ENCODE measurements at regions of chr2 and their contacts with region 1.

Region 1: DNA sequence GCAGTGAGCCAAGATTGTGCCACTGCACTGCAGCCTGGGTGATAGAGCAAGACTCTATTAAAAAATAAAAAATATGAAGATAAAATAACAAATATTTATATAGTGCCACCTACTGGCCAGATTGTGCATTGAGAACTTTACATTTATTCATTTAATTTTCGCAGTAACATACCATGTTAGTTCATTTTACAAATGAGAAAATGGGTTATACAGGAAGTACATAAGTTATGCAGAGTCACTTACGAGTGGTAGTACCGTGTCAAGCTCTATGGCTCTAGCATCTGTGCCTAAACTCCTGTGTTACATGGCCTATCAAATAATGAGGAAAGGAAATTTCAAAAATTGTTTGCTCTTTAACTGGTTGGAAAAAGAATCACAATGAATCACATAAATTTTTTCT is 27.9 kb downstream of the RIF1 start:
- DNase-seq: peak in 3 of 9 experiments; percentile 19 to 48 (median 36)
- ATAC-seq: peak; percentile 62
- H3K4me3 ChIP-seq: no peak overlapping the region
- H3K4me3 Mint-ChIP-seq: no peak overlapping the region
- H3K27ac ChIP-seq: no peak overlapping the region
- H3K27ac Mint-ChIP-seq: peak overlapping the region; percentile 66
- H3K4me1 ChIP-seq: peaks cover 3% of the 10 kb centered on the region
- H3K4me1 Mint-ChIP-seq: peaks cover 7% of the 10 kb centered on the region
- H3K27me3 ChIP-seq: no peaks in the 10 kb centered on the region
- H3K27me3 Mint-ChIP-seq: no peaks in the 10 kb centered on the region
- CTCF ChIP-seq: peak; percentile 84

Region 2: DNA sequence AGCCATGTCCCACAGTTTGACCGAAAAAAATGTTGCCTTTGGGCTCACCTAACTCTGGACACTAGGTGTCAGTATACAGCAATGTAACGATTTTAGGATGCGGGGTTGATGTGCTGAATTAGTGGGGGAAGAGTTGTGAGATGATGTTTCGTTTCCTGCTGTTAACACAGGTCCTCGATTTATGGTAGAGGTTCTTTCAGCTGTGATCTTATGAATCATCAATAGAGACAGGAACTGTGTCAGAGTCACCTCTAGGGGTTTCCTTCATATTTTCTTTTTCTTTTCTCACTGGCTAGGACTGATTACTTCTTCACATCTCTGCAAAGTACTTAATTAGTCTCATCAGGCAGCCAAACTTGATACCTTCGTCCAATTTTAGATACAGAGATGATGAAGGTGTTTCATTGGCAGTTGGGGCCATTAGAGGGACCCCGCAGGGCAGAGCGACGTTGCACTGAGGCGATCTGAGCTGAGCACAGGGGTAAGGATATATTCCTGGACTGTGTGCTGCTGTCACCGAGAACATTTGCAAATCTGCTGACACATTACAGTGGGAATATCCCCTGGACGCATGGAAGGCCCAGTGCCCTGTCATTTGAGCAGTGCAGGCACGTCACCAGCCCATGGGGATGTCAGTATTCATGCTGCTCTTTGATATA is 1839.8 kb before region 1 on chr2:
- CTCF ChIA-PET with region 1: no interaction called
- POLR2A ChIA-PET with region 1: no interaction called
- intact Hi-C with region 1: loop called (anchors 1 to 2 kb)
- DNase-seq: peak; percentile 6 to 84 (median 45)
- ATAC-seq: peak; percentile 96
- H3K4me3 ChIP-seq: no peak overlapping the region
- H3K4me3 Mint-ChIP-seq: peak overlapping the region; percentile 53
- H3K27ac ChIP-seq: peak overlapping the region in 1 of 2 experiments; percentile 14
- H3K27ac Mint-ChIP-seq: no peak overlapping the region
- H3K4me1 ChIP-seq: peaks cover 3% of the 10 kb centered on the region
- H3K4me1 Mint-ChIP-seq: peaks cover 14% of the 10 kb centered on the region
- H3K27me3 ChIP-seq: no peaks in the 10 kb centered on the region
- H3K27me3 Mint-ChIP-seq: peaks cover 13% of the 10 kb centered on the region
- CTCF ChIP-seq: peak; percentile 82

Region 3: GRCh38 chr2:151171186-151171585 is 266.4 kb before region 1 on chr2:
- CTCF ChIA-PET with region 1: interaction called, 3 read pairs
- POLR2A ChIA-PET with region 1: no interaction called
- intact Hi-C with region 1: loop called in 1 of 2 experiments (anchors 5 kb)
- DNase-seq: no peak
- ATAC-seq: no peak
- H3K4me3 ChIP-seq: no peak overlapping the region
- H3K4me3 Mint-ChIP-seq: no peak overlapping the region
- H3K27ac ChIP-seq: no peak overlapping the region
- H3K27ac Mint-ChIP-seq: no peak overlapping the region
- H3K4me1 ChIP-seq: no peaks in the 10 kb centered on the region
- H3K4me1 Mint-ChIP-seq: no peaks in the 10 kb centered on the region
- H3K27me3 ChIP-seq: no peaks in the 10 kb centered on the region
- H3K27me3 Mint-ChIP-seq: peaks cover 9% of the 10 kb centered on the region
- CTCF ChIP-seq: no peak

Region 4: DNA sequence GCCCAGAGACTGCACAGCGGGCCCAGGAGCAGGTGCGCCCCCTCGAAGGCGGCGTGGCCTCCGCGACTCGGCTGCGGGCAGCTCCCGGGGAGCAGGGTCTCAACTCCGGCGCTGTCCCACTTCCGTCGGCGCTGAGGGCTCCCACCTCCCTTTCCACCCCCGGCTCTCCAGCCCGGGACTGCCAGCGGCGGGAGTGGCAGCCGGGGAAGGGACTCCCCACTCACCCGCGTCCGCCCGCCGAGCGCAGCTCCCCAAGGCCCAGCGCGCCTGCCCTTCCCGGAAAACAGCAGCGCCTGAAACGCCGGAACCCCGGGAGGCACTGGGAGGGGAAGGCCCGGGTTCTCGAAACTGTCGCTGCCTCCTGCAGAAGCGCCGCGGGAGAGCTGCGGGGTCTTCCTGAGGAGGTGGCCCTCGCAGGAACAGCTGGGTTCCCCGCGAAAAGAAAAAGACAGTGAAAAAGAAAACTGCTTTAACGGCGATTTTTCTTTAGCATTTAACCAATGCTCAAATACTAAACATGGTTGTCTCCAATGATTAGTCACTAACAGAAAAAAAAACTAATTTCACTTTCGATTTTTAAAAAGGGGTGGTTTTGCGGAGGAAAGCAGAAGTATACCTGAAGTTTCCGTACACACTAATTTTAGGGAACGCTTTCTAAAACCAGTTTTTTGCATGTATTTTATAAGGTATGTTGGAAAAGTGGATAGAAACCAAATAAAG is 148.1 kb before region 1 on chr2 and contains the start of gene NMI:
- CTCF ChIA-PET with region 1: interaction called, 5 read pairs
- POLR2A ChIA-PET with region 1: no interaction called
- intact Hi-C with region 1: loop called in 1 of 2 experiments (anchors 5 kb)
- DNase-seq: peak; percentile 30 to 82 (median 64)
- ATAC-seq: peak; percentile 68
- H3K4me3 ChIP-seq: peak within 1 kb of the TSS; percentile 89 to 92
- H3K4me3 Mint-ChIP-seq: peak within 1 kb of the TSS; percentile 95
- H3K27ac ChIP-seq: peak within 1 kb of the TSS; percentile 92 to 97
- H3K27ac Mint-ChIP-seq: peak within 1 kb of the TSS; percentile 99
- H3K4me1 ChIP-seq: peaks cover 31% of the 10 kb centered on the region
- H3K4me1 Mint-ChIP-seq: peaks cover 46% of the 10 kb centered on the region
- H3K27me3 ChIP-seq: no peaks in the 10 kb centered on the region
- H3K27me3 Mint-ChIP-seq: no peaks in the 10 kb centered on the region
- CTCF ChIP-seq: no peak
- total RNA-seq, gene NMI: 16.9 to 18.0 TPM

Region 5: GRCh38 chr2:151422917-151423439 is 14.7 kb before region 1 on chr2:
- CTCF ChIA-PET with region 1: interaction called, 20 read pairs
- POLR2A ChIA-PET with region 1: interaction called, 3 read pairs
- intact Hi-C with region 1: no loop called
- DNase-seq: peak in 1 of 9 experiments; percentile 9
- ATAC-seq: no peak
- H3K4me3 ChIP-seq: no peak overlapping the region
- H3K4me3 Mint-ChIP-seq: no peak overlapping the region
- H3K27ac ChIP-seq: peak overlapping the region; percentile 9 to 44
- H3K27ac Mint-ChIP-seq: peak overlapping the region; percentile 92
- H3K4me1 ChIP-seq: peaks cover 10% of the 10 kb centered on the region
- H3K4me1 Mint-ChIP-seq: peaks cover 35% of the 10 kb centered on the region
- H3K27me3 ChIP-seq: no peaks in the 10 kb centered on the region
- H3K27me3 Mint-ChIP-seq: no peaks in the 10 kb centered on the region
- CTCF ChIP-seq: no peak

Region 6: GRCh38 chr2:151459358-151459757 is 21.7 kb after region 1 on chr2:
- CTCF ChIA-PET with region 1: interaction called, 13 read pairs
- POLR2A ChIA-PET with region 1: no interaction called
- intact Hi-C with region 1: no loop called
- DNase-seq: no peak
- ATAC-seq: no peak
- H3K4me3 ChIP-seq: no peak overlapping the region
- H3K4me3 Mint-ChIP-seq: no peak overlapping the region
- H3K27ac ChIP-seq: no peak overlapping the region
- H3K27ac Mint-ChIP-seq: no peak overlapping the region
- H3K4me1 ChIP-seq: no peaks in the 10 kb centered on the region
- H3K4me1 Mint-ChIP-seq: no peaks in the 10 kb centered on the region
- H3K27me3 ChIP-seq: no peaks in the 10 kb centered on the region
- H3K27me3 Mint-ChIP-seq: no peaks in the 10 kb centered on the region
- CTCF ChIP-seq: no peak

Region 7: DNA sequence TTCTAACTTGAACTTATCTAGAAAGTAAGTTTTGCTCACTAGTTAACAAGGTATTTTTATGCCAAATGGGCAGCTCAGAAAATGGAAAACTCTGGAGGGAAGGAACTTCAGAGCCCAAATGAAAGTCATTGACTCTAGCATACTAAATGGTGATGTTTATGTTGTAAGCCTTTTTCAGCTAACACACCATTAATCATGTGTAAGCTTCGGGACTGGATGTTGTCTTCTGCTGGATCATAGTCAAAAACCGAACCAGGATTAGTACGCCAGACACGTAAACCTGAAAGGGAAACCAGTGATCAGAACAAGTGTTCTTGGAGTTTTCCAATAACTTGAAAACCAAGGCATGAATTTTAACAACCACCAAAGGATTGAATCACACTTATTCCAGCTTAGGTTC is 53.9 kb after region 1 on chr2:
- CTCF ChIA-PET with region 1: no interaction called
- POLR2A ChIA-PET with region 1: no interaction called
- intact Hi-C with region 1: no loop called
- DNase-seq: no peak
- ATAC-seq: no peak
- H3K4me3 ChIP-seq: no peak overlapping the region
- H3K4me3 Mint-ChIP-seq: no peak overlapping the region
- H3K27ac ChIP-seq: no peak overlapping the region
- H3K27ac Mint-ChIP-seq: no peak overlapping the region
- H3K4me1 ChIP-seq: no peaks in the 10 kb centered on the region
- H3K4me1 Mint-ChIP-seq: no peaks in the 10 kb centered on the region
- H3K27me3 ChIP-seq: no peaks in the 10 kb centered on the region
- H3K27me3 Mint-ChIP-seq: no peaks in the 10 kb centered on the region
- CTCF ChIP-seq: no peak

Region 8: DNA sequence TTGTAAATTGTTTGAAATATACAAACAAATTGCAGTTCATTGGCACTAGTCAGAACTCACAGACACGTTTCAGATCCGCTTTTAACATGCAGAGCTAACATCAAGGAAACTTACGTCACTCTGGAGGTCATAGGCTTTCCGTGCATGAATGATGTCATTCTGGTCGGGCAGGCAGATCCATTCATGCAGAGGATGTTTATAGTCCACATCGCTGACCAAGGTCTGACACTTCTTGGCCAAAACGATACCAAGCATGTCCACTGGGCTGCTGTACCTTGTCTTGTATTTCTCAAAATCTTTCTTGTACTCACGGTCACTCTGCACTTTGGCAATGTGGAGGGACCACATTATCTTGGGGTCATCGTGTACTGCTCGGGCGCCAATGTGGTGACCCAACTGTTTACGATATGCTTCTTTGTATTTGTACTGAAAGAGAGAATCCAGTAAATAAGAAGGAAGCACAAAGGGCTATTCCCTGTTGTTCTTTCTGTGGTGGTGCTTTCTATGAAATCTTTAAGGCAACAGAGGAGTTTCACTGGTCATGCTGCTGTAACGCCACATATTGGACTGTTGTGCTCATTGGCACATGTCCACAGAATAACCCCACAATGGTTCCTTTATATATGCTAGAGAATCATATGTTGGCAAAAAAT is 181.8 kb after region 1 on chr2:
- CTCF ChIA-PET with region 1: no interaction called
- POLR2A ChIA-PET with region 1: no interaction called
- intact Hi-C with region 1: no loop called
- DNase-seq: no peak
- ATAC-seq: no peak
- H3K4me3 ChIP-seq: no peak overlapping the region
- H3K4me3 Mint-ChIP-seq: no peak overlapping the region
- H3K27ac ChIP-seq: no peak overlapping the region
- H3K27ac Mint-ChIP-seq: no peak overlapping the region
- H3K4me1 ChIP-seq: no peaks in the 10 kb centered on the region
- H3K4me1 Mint-ChIP-seq: peaks cover 10% of the 10 kb centered on the region
- H3K27me3 ChIP-seq: no peaks in the 10 kb centered on the region
- H3K27me3 Mint-ChIP-seq: no peaks in the 10 kb centered on the region
- CTCF ChIP-seq: no peak

Region 9: DNA sequence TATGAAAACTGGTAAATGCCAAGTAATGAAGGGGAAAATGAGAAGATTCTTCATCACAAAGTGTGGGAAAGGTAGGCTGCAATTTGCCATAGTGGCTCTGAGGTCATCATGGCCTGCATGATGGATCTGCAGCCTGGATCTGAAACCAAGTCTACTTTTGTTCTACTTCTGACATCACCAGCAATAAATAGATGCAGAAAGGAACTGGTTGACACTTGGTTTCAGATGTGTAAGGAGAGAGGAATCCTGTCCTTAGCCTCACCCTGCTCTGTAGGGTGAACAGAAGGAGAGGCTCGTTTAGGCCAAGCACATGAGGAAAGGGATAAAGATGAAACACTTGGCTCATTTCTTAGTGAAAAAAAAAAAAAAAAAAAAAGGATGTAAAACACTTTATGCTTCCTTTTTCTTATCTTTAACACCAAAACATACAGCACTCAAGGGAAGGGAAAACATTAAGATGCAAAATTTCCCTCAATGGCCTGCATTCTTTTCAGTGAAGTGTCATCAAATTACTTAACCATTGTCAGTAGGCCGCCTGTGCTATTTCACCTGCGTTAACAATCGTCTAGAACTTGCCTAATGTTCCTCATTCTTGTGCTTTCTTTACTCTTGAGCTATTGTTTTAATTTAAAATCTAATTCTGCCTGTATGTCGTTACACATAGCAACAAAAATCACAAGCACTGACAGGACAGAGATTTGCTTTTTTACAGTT is 292.8 kb after region 1 on chr2:
- CTCF ChIA-PET with region 1: no interaction called
- POLR2A ChIA-PET with region 1: no interaction called
- intact Hi-C with region 1: no loop called
- DNase-seq: no peak
- ATAC-seq: no peak
- H3K4me3 ChIP-seq: no peak overlapping the region
- H3K4me3 Mint-ChIP-seq: no peak overlapping the region
- H3K27ac ChIP-seq: no peak overlapping the region
- H3K27ac Mint-ChIP-seq: no peak overlapping the region
- H3K4me1 ChIP-seq: no peaks in the 10 kb centered on the region
- H3K4me1 Mint-ChIP-seq: no peaks in the 10 kb centered on the region
- H3K27me3 ChIP-seq: no peaks in the 10 kb centered on the region
- H3K27me3 Mint-ChIP-seq: no peaks in the 10 kb centered on the region
- CTCF ChIP-seq: no peak

Measured in CD8-positive, alpha-beta T cell (primary cell).